H1 (cell line): ENCODE measurements at regions of chr1 and their contacts with region 1.

Region 1: GRCh38 chr1:27568300-27569087 is 35.5 kb downstream of the AHDC1 start:
- DNase-seq: peak; percentile 80 to 97
- H3K4me3 ChIP-seq: peak overlapping the region in 3 of 4 experiments; percentile 1 to 43 (median 29); a peak in 6 of 8 replicates
- H3K27ac ChIP-seq: peak overlapping the region; percentile 1; the same call in 1 of the 2 replicates
- H3K4me1 ChIP-seq: peaks cover 37 to 77% (median 67%) of the 10 kb centered on the region in 4 experiments
- H3K27me3 ChIP-seq: no peaks in the 10 kb centered on the region
- CTCF ChIP-seq: peak in 2 of 3 experiments; percentile 73 to 91; a peak in 3 of 4 replicates
- EP300 ChIP-seq: no peak
- POLR2A ChIP-seq: no peak
- RAD21 ChIP-seq: peak; percentile 32 to 69

Region 2: DNA sequence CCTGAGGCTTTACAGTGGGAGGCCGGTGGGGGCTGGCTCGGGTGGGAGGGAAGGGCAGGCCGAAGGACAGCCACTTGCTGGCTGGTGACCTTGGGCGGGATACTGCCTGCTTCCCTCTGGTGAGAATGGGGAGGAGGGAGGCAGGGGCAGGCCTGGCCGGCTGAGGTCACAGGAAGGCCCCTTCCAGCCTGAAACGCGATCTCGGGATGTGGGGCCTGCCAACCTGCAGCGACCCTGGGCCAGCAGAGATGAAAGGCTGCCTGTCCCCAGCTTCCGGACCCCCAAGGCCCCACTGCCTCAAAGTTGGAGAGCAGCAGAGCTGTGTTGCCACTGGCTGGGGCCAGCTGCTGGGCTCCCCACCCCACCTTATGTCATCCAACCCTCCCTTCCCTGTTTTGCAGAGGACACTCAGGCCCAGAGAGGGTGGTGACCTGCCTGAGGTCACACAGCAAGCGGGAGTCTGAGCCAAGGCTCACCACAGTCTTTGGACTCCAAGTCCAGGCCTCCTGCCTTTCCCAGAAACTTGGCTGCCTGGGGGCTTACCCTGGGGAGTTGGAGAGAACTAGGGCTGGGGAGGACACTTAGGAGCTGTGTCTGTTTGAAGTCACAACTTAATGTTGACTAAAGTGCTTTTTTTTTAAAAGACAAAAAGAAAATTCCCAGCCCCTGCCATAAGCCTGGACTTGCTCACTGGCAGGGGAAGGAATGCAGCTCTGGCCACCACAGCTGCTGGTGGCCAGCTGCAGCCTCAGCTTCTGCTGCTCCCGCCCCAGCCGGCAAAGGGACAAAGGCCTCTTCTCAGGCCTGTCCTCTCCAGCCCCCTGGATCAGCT is 63.7 kb before region 1 on chr1:
- CTCF ChIA-PET with region 1: interaction called, 4 read pairs
- POLR2A ChIA-PET with region 1: interaction called, 10 read pairs
- DNase-seq: peak in 1 of 2 experiments; percentile 67
- H3K4me3 ChIP-seq: no peak overlapping the region
- H3K27ac ChIP-seq: no peak overlapping the region
- H3K4me1 ChIP-seq: peaks cover 0 to 14% (median 6%) of the 10 kb centered on the region in 4 experiments; a peak in 5 of 7 replicates
- H3K27me3 ChIP-seq: no peaks in the 10 kb centered on the region
- CTCF ChIP-seq: no peak
- EP300 ChIP-seq: no peak
- POLR2A ChIP-seq: no peak
- RAD21 ChIP-seq: no peak

Region 3: GRCh38 chr1:27581823-27582243 is 13.3 kb after region 1 on chr1:
- CTCF ChIA-PET with region 1: interaction called, 45 read pairs
- POLR2A ChIA-PET with region 1: interaction called, 350 read pairs
- DNase-seq: no peak
- H3K4me3 ChIP-seq: no peak overlapping the region
- H3K27ac ChIP-seq: no peak overlapping the region
- H3K4me1 ChIP-seq: peaks cover 0 to 5% (median 1%) of the 10 kb centered on the region in 4 experiments; a peak in 6 of 7 replicates
- H3K27me3 ChIP-seq: no peaks in the 10 kb centered on the region
- CTCF ChIP-seq: no peak
- EP300 ChIP-seq: no peak
- POLR2A ChIP-seq: no peak
- RAD21 ChIP-seq: no peak

Region 4: GRCh38 chr1:27686223-27687018 is 117.9 kb after region 1 on chr1:
- CTCF ChIA-PET with region 1: no interaction called
- POLR2A ChIA-PET with region 1: no interaction called
- DNase-seq: no peak
- H3K4me3 ChIP-seq: no peak overlapping the region
- H3K27ac ChIP-seq: no peak overlapping the region
- H3K4me1 ChIP-seq: peaks cover 4 to 11% (median 8%) of the 10 kb centered on the region in 4 experiments
- H3K27me3 ChIP-seq: no peaks in the 10 kb centered on the region
- CTCF ChIP-seq: no peak
- EP300 ChIP-seq: no peak
- POLR2A ChIP-seq: no peak
- RAD21 ChIP-seq: no peak